ENCODE measurements at regions of chr4 and their contacts with region 1.

Region 1: GRCh38 chr4:25159884-25160713 is at the start of gene SEPSECS:
- DNase-seq: peak; percentile 97
- H3K4me3 Mint-ChIP-seq: peak within 1 kb of the TSS; percentile 85
- H3K27ac Mint-ChIP-seq: peak within 1 kb of the TSS; percentile 92
- H3K4me1 Mint-ChIP-seq: peaks cover 50% of the 10 kb centered on the region
- H3K27me3 Mint-ChIP-seq: no peaks in the 10 kb centered on the region

Region 2: GRCh38 chr4:25180524-25181131 is 20.5 kb after region 1 on chr4:
- CTCF ChIA-PET with region 1: interaction called, 17 read pairs
- DNase-seq: peak; percentile 52
- H3K4me3 Mint-ChIP-seq: no peak overlapping the region
- H3K27ac Mint-ChIP-seq: no peak overlapping the region
- H3K4me1 Mint-ChIP-seq: peaks cover 20% of the 10 kb centered on the region
- H3K27me3 Mint-ChIP-seq: no peaks in the 10 kb centered on the region

Region 3: GRCh38 chr4:25234390-25235370 is 74.6 kb after region 1 on chr4:
- CTCF ChIA-PET with region 1: interaction called, 13 read pairs
- DNase-seq: peak; percentile 41
- H3K4me3 Mint-ChIP-seq: peak overlapping the region; percentile 85
- H3K27ac Mint-ChIP-seq: peak overlapping the region; percentile 94
- H3K4me1 Mint-ChIP-seq: peaks cover 43% of the 10 kb centered on the region
- H3K27me3 Mint-ChIP-seq: no peaks in the 10 kb centered on the region

Measured in activated naive CD4-positive, alpha-beta T cell treated with anti-CD3 and anti-CD28 coated beads, Interleukin-2, amount 10 ng/mL, durations not matched to agents 7 days and 5 days (primary cell).